HEK293T (cell line): ENCODE measurements at regions of chr2 and their contacts with region 1.

Region 1: GRCh38 chr2:197453161-197453914 is at the start of gene COQ10B:
- DNase-seq: peak; percentile 95

Region 2: DNA sequence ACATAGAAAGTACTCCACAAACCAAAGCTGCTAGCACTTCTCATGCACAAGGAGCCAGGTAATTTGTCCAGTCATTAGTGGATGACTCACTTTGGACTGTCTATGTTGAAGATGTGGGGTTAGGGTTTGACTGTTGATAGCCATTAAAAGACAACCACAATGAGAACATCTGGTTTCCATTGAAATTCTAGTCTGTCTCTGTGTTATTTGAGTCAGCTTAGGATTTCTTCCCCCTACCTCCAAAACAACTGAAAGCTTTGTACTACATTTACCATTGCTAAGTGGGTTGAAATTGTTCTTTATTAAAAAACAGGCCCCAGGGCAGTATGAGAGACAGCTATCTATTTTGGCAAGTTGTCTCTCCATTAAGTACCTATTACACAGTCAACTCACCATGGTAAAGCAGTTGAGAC is 92.6 kb before region 1 on chr2:
- CTCF ChIA-PET with region 1: no interaction called
- POLR2A ChIA-PET with region 1: no interaction called
- DNase-seq: no peak

Region 3: GRCh38 chr2:197434541-197435513 is 18.5 kb before region 1 on chr2 and contains the start of gene SF3B1:
- CTCF ChIA-PET with region 1: no interaction called
- POLR2A ChIA-PET with region 1: interaction called, 56 read pairs
- DNase-seq: peak; percentile 95

Region 4: DNA sequence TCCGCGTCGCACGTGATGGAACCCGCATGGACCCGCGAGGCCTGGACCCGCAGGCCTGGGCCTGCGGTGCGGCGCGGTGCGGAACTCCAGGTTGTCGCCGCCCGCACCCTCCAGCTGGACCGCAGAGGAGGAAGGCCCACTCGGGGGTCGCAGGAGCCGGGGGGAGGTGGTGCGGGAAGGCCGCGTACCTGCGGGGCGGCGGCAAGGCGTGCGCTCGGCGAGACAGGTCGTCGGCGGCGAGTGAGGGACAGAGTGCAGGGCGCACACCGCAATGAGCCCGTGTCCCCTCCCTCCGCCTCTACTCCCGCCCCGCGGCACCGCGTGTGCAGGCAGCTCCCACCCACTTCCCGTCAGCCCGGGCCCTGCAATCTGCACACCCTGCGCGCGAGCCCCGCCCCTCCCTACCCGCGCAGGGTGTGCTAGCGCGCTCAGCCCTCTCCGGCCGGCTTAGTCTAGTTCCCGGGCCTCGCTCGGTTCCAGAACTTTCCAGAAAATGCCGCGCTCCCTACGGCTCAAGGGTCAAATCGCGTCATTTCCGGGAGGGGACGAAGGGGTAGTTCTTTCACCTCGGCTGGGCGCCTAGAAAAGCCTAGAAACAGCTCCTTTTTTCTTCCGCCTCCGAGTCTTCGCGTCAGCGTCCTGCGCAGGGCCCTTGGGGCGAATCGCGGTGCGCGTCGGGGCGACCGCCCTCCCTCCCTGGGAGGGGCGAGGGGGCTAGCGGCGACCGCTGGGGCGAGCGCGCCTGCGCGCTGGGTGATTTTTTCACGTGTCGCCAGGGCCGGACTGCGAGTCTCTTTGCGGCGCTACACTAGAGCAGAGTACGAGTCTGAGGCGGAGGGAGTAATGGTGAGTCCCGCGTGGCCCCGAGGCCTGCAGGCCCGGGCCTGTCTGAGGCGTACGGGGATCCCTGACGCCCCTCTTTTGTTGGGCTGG is 46.5 kb after region 1 on chr2 and contains the starts of genes HSPD1 and HSPE1:
- CTCF ChIA-PET with region 1: no interaction called
- POLR2A ChIA-PET with region 1: interaction called, 12 read pairs
- DNase-seq: peak; percentile 93